Colonic mucosa (tissue), 4 donors: ENCODE measurements at regions of chr15 and their contacts with region 1.

Region 1: DNA sequence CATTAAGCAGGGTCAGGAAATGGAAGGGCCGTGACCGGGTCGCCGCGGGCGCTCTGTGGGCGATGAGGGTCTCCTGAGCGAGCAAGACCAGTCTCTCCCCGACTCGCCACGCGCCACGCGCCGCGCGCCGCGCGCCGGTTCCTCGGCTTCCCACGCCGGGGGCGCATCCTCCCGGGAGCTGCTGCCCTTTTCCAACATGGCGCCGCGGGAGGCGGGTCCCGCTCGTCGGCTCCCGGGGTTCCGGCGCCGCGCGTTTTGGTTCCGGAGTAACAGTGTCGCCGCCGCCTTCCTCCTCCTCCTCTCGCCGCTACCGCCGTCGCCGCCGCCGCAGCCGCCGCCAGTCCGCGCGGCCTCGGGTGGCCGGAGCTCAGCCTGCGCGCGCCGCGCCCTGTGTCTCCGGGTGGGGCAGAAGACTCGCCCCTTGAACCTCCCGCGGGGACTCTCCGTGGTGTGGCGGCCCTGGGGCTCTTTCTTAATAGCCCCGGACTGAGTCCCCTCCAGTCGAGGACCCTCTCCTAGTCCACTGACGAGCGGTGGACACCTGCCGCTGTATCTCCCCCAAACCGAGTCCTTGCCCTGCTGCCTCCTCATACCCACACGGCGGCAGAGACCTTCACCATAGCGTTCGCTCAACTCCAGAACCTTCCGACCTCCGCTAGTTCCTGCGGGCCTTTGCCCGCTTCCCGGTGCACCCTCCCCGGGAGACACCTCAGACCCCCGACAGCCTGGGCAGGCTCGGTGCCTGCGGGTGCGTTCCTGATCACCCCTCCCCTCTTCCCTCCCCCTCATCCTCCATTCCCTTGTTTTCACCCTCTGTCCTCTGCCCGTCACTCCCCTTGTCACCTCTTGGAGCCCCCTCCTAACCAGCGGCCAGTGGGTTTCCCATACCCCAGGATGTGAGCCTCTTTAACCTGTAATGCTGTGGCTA is at the start of gene MAP2K5:
- DNase-seq: peak; percentile 88
- H3K4me3 ChIP-seq: peak within 1 kb of the TSS; percentile 64
- H3K27ac ChIP-seq: peak within 1 kb of the TSS; percentile 89
- H3K4me1 ChIP-seq: no peaks in the 10 kb centered on the region
- H3K27me3 ChIP-seq: no peaks in the 10 kb centered on the region
- CTCF ChIP-seq: no peak
- total RNA-seq, gene MAP2K5: 19.1 to 20.2 TPM

Region 2: DNA sequence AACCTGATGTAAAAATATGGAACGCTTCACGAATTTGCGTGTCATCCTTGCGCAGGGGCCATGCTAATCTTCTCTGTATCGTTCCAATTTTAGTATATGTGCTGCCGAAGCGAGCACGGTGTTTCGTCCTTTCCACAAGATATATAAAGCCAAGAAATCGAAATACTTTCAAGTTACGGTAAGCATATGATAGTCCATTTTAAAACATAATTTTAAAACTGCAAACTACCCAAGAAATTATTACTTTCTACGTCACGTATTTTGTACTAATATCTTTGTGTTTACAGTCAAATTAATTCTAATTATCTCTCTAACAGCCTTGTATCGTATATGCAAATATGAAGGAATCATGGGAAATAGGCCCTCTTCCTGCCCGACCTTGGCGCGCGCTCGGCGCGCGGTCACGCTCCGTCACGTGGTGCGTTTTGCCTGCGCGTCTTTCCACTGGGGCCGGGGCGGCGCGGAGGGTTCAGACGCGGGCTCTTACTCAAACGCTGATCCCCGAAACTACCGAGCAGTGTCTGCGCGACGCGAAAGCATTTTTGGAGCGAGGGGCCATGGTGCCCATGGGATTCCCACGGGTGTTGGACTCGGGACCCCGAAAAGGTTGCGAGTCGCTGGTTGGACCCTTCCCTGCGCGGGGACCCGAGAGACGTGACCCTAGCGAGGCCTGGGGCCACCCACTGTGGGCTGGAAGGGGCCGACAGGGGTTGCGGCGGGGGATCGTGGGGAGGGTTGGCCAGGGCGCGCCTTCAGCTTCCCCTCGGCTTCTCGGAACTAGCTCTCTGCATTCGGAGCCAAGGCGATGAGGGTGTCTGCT is 297.5 kb after region 1 on chr15 and contains the start of gene RNU6-1:
- intact Hi-C with region 1: loop called (anchors 10 kb)
- DNase-seq: peak; percentile 95
- H3K4me3 ChIP-seq: peak within 1 kb of the TSS; percentile 62
- H3K27ac ChIP-seq: peak within 1 kb of the TSS; percentile 83
- H3K4me1 ChIP-seq: peaks cover 10% of the 10 kb centered on the region
- H3K27me3 ChIP-seq: peaks cover 12% of the 10 kb centered on the region
- CTCF ChIP-seq: no peak
- total RNA-seq, gene RNU6-1: not detected